ENCODE measurements at regions of chr19 and their contacts with region 1.

Region 1: DNA sequence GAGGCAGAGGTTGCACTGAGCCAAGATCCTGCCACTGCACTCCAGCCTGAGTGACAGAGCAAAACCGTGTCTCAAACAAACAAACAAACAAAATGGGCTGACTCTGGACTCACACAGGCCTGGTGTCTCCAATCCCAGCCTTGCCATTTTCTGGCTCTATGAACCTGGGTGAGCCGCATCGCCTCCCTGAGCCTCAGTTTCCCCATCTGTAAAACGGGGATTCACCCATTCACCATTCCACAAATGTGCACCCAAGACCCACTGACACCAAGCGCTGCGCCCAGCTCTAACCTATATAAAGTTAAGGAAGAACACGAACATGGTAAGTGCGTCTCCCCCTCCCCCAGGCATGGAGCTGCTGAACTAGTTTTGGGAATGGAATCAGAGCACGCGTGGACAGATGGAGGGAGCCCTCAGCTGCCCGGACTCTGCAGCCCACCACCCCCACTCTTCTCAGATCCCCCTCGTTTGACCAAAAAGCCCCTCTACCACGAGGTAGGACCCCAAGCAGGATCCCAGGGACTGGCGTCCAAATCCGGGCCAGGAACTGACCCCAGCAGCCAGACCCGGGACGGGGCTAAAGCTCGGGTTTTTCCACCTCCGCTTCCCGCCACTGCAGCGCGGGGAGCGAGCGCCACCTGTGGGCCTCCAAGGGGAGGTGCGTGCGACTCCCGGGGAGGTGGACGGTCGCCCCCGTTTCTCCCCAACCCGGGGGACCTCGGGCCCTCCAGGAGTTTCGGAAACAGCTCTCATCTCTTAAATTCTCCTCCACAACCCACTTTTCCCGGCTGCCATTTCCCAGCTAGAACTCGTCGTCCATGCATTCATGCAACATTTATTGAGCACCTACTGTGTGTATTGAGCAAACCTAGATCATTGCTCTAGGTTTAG is 33.0 kb upstream of the ADGRE5 start:
- DNase-seq: peak; percentile 31 to 85 (median 64)
- ATAC-seq: peak; percentile 82
- H3K4me3 ChIP-seq: peak overlapping the region; percentile 19 to 20
- H3K4me3 Mint-ChIP-seq: peak overlapping the region; percentile 15
- H3K27ac ChIP-seq: no peak overlapping the region
- H3K27ac Mint-ChIP-seq: no peak overlapping the region
- H3K4me1 ChIP-seq: peaks cover 19% of the 10 kb centered on the region
- H3K4me1 Mint-ChIP-seq: peaks cover 13% of the 10 kb centered on the region
- H3K27me3 ChIP-seq: no peaks in the 10 kb centered on the region
- H3K27me3 Mint-ChIP-seq: no peaks in the 10 kb centered on the region
- CTCF ChIP-seq: peak; percentile 92

Region 2: GRCh38 chr19:14147797-14148605 is 200.2 kb before region 1 on chr19:
- CTCF ChIA-PET with region 1: interaction called, 38 read pairs
- POLR2A ChIA-PET with region 1: no interaction called
- intact Hi-C with region 1: loop called (anchors 1 kb)
- DNase-seq: peak; percentile 31 to 77 (median 59)
- ATAC-seq: peak; percentile 60
- H3K4me3 ChIP-seq: no peak overlapping the region
- H3K4me3 Mint-ChIP-seq: peak overlapping the region; percentile 82
- H3K27ac ChIP-seq: peak overlapping the region; percentile 87 to 94
- H3K27ac Mint-ChIP-seq: peak overlapping the region; percentile 100
- H3K4me1 ChIP-seq: peaks cover 30% of the 10 kb centered on the region
- H3K4me1 Mint-ChIP-seq: peaks cover 38% of the 10 kb centered on the region
- H3K27me3 ChIP-seq: no peaks in the 10 kb centered on the region
- H3K27me3 Mint-ChIP-seq: no peaks in the 10 kb centered on the region
- CTCF ChIP-seq: peak; percentile 30

Region 3: GRCh38 chr19:14218620-14219330 is 129.5 kb before region 1 on chr19:
- CTCF ChIA-PET with region 1: interaction called, 21 read pairs
- POLR2A ChIA-PET with region 1: interaction called, 4 read pairs
- intact Hi-C with region 1: no loop called
- DNase-seq: no peak
- ATAC-seq: no peak
- H3K4me3 ChIP-seq: no peak overlapping the region
- H3K4me3 Mint-ChIP-seq: no peak overlapping the region
- H3K27ac ChIP-seq: no peak overlapping the region
- H3K27ac Mint-ChIP-seq: no peak overlapping the region
- H3K4me1 ChIP-seq: peaks cover 5% of the 10 kb centered on the region
- H3K4me1 Mint-ChIP-seq: peaks cover 13% of the 10 kb centered on the region
- H3K27me3 ChIP-seq: no peaks in the 10 kb centered on the region
- H3K27me3 Mint-ChIP-seq: no peaks in the 10 kb centered on the region
- CTCF ChIP-seq: no peak

Region 4: GRCh38 chr19:14366498-14366915 is 18.3 kb after region 1 on chr19:
- CTCF ChIA-PET with region 1: interaction called, 45 read pairs
- POLR2A ChIA-PET with region 1: interaction called, 3 read pairs
- intact Hi-C with region 1: no loop called
- DNase-seq: peak; percentile 83 to 97 (median 90)
- ATAC-seq: peak; percentile 45
- H3K4me3 ChIP-seq: no peak overlapping the region
- H3K4me3 Mint-ChIP-seq: peak overlapping the region; percentile 57
- H3K27ac ChIP-seq: peak overlapping the region; percentile 98 to 100
- H3K27ac Mint-ChIP-seq: peak overlapping the region; percentile 99
- H3K4me1 ChIP-seq: peaks cover 81% of the 10 kb centered on the region
- H3K4me1 Mint-ChIP-seq: peaks cover 68% of the 10 kb centered on the region
- H3K27me3 ChIP-seq: no peaks in the 10 kb centered on the region
- H3K27me3 Mint-ChIP-seq: no peaks in the 10 kb centered on the region
- CTCF ChIP-seq: no peak

Region 5: DNA sequence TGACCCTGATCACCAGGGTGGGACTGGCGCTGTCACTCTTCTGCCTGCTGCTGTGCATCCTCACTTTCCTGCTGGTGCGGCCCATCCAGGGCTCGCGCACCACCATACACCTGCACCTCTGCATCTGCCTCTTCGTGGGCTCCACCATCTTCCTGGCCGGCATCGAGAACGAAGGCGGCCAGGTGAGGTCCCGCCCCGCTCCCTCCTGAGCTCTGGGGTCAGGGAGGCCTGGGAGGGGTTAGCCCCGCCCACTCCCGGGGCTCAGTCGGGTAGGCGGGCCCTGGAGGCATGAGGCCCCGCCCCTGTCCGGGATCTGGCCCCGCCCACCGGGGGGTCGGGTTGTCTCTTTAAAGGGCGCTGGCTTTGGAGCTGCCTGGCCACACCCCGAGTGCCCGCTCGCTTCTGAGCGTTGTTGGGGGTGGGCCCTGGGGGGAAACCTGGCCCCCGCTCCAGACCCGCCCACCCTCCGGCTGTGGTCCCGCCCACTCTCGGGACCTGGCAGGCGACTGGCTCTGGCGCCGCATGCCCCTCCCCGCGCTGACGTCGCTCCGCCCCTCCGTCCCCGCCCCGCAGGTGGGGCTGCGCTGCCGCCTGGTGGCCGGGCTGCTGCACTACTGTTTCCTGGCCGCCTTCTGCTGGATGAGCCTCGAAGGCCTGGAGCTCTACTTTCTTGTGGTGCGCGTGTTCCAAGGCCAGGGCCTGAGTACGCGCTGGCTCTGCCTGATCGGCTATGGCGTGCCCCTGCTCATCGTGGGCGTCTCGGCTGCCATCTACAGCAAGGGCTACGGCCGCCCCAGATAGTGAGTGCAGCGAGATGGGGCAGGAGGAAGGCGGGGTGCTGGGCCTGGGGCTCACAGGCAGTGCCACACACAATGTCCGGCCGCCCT is 57.8 kb after region 1 on chr19:
- CTCF ChIA-PET with region 1: interaction called, 27 read pairs
- POLR2A ChIA-PET with region 1: no interaction called
- intact Hi-C with region 1: loop called in 1 of 2 experiments (anchors 1 kb)
- DNase-seq: peak; percentile 75 to 95 (median 88)
- ATAC-seq: peak; percentile 83
- H3K4me3 ChIP-seq: no peak overlapping the region
- H3K4me3 Mint-ChIP-seq: no peak overlapping the region
- H3K27ac ChIP-seq: peak overlapping the region; percentile 19 to 62
- H3K27ac Mint-ChIP-seq: peak overlapping the region; percentile 71
- H3K4me1 ChIP-seq: peaks cover 37% of the 10 kb centered on the region
- H3K4me1 Mint-ChIP-seq: peaks cover 22% of the 10 kb centered on the region
- H3K27me3 ChIP-seq: no peaks in the 10 kb centered on the region
- H3K27me3 Mint-ChIP-seq: no peaks in the 10 kb centered on the region
- CTCF ChIP-seq: peak; percentile 91

Measured in CD8-positive, alpha-beta T cell (primary cell).